Left ventricle myocardium superior (tissue), 1 donor: ENCODE measurements at regions of chr3 and their contacts with region 1.

Region 1: DNA sequence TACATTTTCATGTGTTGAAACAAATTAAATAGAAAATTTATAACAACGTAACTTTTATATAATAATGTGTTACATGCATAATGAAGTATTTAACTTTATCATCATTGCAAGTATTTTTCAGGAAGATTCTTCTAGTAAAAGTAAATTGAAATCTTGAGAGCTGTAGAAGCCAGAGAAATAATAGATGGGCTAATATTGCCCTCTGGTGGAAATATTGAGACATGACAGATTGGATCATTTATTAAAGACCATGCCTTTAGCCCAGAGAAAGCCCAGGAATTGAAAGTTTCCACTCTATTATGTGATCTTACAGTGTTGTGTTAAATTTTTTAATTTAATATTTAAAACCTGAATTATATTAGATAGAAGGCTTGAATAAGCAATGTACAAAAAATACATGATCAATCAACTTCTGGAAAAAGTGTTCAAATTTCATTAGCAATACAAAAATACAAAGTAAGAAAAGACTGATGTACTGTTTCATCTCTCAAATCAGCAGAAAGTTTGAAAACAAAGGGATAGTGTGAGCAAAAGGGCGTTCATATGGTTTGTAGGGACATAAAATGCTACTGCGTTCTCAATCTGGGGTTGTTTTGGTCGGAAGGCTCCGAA is 52.7 kb upstream of the SPTSSB start:
- DNase-seq: no peak
- ATAC-seq: peak; percentile 51

Region 2: GRCh38 chr3:160707187-160707794 is 716.7 kb before region 1 on chr3:
- intact Hi-C with region 1: loop called (anchors 10 kb)
- DNase-seq: no peak
- ATAC-seq: peak; percentile 74

Region 3: DNA sequence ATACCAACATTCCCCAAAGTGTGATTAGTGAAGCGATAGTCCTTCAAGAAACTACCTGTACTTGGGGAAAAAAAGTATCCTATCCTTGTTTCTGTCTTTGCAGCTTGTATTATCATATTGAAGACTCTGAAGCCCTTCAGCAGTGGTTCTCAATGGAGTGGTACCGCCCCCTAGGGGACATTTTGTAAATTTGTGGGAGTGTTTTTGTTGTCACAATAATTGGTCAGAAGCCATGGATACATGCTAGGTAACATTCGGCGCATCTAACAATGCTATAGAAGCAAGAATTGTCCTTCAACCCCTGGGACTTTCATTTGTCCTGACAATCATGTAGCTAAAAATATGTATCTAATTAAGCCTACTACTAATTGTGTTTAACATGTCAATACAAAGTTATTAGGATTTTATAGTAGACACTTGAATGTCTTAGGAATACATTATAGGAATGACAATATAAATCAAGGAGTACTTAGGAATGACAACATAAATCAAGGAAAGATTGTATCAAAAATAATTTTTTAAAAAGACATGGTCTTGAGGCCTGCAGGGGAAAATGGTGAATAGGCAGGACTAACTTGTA is 149.2 kb before region 1 on chr3:
- intact Hi-C with region 1: loop called (anchors 2 kb)
- DNase-seq: no peak
- ATAC-seq: no peak